ENCODE measurements at regions of chr6 and their contacts with region 1.

Region 1: DNA sequence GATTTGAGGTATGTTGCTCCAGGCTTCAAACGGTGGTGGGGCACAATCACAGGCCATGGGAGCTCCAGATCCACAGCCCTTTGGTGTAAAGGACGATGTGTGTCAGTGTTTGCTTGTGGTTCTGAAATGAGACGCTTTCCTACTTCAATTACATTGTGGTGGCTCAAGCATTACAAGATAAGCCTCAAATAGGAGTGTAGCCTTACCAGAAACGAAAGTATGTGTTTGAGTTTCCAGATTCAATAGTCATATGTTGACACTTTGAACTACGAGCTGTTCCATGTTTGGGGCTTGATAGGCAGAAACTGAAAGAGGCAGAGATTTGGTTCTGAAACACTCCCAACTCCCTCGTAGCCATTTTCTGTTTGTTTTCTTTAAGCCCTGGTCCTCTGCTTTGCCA is 187.1 kb downstream of the MYLK4 start:
- DNase-seq: no peak

Region 2: GRCh38 chr6:1817033-1817761 is 746.4 kb before region 1 on chr6:
- intact Hi-C with region 1: loop called in 1 of 2 experiments (anchors 10 kb)
- DNase-seq: no peak

Region 3: DNA sequence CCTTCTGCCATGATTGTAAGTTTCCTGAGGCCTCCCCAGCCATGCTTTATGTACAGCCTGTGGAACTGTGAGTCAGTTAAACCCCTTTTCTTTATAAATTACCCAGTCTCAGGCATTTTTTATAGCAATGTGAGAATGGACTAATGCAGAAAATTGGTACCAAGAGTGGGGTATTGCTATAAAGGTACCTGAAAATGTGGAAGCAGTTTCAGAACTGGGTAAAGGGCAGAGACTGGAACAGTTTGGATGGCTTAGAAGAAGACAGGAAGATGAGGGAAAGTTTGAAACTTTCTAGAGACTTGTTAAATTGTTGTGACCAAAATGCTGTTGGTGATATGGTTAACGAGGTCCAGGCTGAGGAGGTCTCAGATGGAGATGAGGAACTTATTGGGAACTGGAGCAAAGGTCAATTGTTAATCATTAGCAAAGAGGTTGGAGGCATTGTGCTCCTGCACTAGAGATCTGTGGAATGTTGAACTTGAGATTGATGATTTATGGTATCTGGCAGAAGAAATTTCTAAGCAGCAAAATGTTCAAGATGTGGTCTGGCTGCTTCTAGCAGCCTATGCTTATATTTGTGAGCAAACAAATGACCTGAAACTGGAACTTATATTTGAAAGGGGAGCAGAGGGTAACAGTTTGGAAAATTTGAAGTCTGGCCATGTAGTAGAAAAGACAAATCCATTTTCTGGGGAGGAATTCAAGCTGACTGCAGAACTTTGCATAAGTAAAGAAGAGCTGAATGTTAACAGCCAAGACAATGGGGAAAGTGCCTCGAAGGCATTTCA is 239.3 kb before region 1 on chr6:
- intact Hi-C with region 1: no loop called
- DNase-seq: no peak